ENCODE measurements at regions of chr19 and their contacts with region 1.

Region 1: GRCh38 chr19:23699082-23699761 is 12.2 kb upstream of the ZNF675 start:
- DNase-seq: peak; percentile 38
- H3K4me3 Mint-ChIP-seq: peak overlapping the region; percentile 53
- H3K27ac Mint-ChIP-seq: peak overlapping the region; percentile 35
- H3K4me1 Mint-ChIP-seq: peaks cover 12% of the 10 kb centered on the region
- H3K27me3 Mint-ChIP-seq: no peaks in the 10 kb centered on the region
- CTCF ChIP-seq: no peak

Region 2: DNA sequence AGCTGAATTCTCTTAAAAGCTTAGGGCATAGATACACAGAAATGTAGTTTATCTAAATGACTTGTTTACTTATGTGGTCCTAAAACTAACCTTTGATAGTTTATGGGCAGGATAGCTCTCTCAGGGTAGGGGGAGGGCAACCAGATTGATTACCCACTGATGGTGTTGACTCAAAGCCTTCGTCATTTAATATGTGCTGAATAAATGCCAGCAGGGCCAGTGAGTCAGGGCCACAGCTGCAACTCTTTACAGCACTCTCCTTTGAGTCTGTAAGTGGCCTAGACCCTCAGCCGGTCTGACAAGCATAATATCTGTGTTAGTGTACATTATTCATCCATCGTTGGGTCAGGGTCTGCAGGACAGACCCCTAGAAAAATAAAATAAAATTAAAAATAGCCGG is 140.7 kb before region 1 on chr19:
- CTCF ChIA-PET with region 1: no interaction called
- POLR2A ChIA-PET with region 1: no interaction called
- intact Hi-C with region 1: no loop called
- DNase-seq: peak; percentile 22
- H3K4me3 Mint-ChIP-seq: no peak overlapping the region
- H3K27ac Mint-ChIP-seq: no peak overlapping the region
- H3K4me1 Mint-ChIP-seq: no peaks in the 10 kb centered on the region
- H3K27me3 Mint-ChIP-seq: no peaks in the 10 kb centered on the region
- CTCF ChIP-seq: no peak

Region 3: GRCh38 chr19:23686621-23687423 is 12.4 kb before region 1 on chr19 and contains the start of gene ZNF675:
- CTCF ChIA-PET with region 1: interaction called, 6 read pairs
- POLR2A ChIA-PET with region 1: interaction called, 52 read pairs
- intact Hi-C with region 1: no loop called
- DNase-seq: peak; percentile 96
- H3K4me3 Mint-ChIP-seq: peak within 1 kb of the TSS; percentile 98
- H3K27ac Mint-ChIP-seq: peak within 1 kb of the TSS; percentile 97
- H3K4me1 Mint-ChIP-seq: peaks cover 6% of the 10 kb centered on the region
- H3K27me3 Mint-ChIP-seq: no peaks in the 10 kb centered on the region
- CTCF ChIP-seq: no peak
- total RNA-seq, gene ZNF675: 7.9 and 8.8 TPM in 2 replicates

Region 4: GRCh38 chr19:23718802-23719201 is 19.6 kb after region 1 on chr19:
- CTCF ChIA-PET with region 1: no interaction called
- POLR2A ChIA-PET with region 1: no interaction called
- intact Hi-C with region 1: no loop called
- DNase-seq: no peak
- H3K4me3 Mint-ChIP-seq: no peak overlapping the region
- H3K27ac Mint-ChIP-seq: no peak overlapping the region
- H3K4me1 Mint-ChIP-seq: no peaks in the 10 kb centered on the region
- H3K27me3 Mint-ChIP-seq: no peaks in the 10 kb centered on the region
- CTCF ChIP-seq: no peak

Region 5: DNA sequence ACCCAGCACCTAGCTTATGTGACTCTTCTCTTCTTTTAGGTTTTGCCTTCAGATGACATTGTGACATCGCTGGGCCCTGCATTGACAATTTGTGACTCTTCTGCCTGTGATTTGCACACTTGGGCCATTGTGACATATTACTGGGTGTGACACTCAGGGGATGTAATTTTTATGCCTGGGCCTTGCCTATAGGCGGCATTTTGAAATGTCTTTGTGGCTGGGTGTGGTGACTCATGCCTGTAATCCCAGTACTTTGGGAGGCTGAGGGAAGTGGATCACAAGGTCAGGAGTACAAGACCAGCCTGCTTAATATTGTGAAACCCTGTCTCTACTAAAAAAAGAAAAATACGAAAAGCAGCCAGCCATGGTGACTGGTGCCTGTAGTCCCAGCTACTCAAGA is 87.9 kb after region 1 on chr19:
- CTCF ChIA-PET with region 1: no interaction called
- POLR2A ChIA-PET with region 1: no interaction called
- intact Hi-C with region 1: no loop called
- DNase-seq: peak; percentile 54
- H3K4me3 Mint-ChIP-seq: no peak overlapping the region
- H3K27ac Mint-ChIP-seq: no peak overlapping the region
- H3K4me1 Mint-ChIP-seq: no peaks in the 10 kb centered on the region
- H3K27me3 Mint-ChIP-seq: no peaks in the 10 kb centered on the region
- CTCF ChIP-seq: no peak

Measured in MCF 10A (cell line).